Activated CD4-positive, alpha-beta T cell treated with anti-CD3 and anti-CD28 coated beads, Interleukin-2, amount 10 ng/mL, durations not matched to agents 24 days and 14 days (primary cell): ENCODE measurements at regions of chr11 and their contacts with region 1.

Region 1: GRCh38 chr11:71928737-71929452 is at the start of gene RNF121:
- DNase-seq: peak; percentile 99
- H3K4me3 Mint-ChIP-seq: peak within 1 kb of the TSS; percentile 100
- H3K27ac Mint-ChIP-seq: peak within 1 kb of the TSS; percentile 99
- H3K4me1 Mint-ChIP-seq: peaks cover 41% of the 10 kb centered on the region
- H3K27me3 Mint-ChIP-seq: no peaks in the 10 kb centered on the region
- total RNA-seq, gene RNF121: 56.4 and 65.4 TPM in 2 replicates

Region 2: DNA sequence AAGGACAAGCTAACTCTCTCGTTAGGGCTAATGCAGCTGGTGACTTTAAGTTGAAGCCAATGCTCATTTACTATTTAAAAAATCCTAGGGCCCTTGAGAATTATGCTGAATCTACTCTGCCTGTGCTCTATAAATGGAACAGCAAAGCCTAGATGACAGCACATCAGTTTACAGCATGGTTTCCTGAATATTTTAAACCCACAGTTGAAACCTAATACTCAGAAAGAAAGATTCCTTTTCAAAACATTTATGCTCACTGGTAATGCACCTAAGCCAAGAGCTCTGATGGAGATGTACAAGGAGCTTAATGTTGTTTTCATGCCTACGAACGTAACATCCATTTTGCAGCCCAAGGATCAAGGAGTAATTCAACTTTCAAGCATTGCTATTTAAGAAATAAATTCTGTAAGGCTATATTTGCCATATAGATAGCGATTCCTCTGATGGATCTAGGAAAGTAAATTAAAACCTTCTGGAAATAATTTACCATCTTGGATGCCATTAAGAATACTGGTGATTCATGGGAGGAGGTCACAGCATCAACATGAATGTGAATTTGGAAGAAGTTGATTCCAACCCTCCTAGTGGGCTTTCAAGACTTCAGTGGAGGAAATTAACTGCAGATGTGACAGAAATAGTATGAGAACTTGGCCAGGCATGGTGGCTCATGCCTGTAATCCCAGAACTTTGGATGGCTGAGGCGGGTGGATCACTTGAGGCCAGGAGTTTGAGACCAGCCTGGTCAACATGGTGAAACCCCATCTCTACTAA is 15.0 kb before region 1 on chr11:
- intact Hi-C with region 1: loop called (anchors 1 kb)
- DNase-seq: no peak
- H3K4me3 Mint-ChIP-seq: no peak overlapping the region
- H3K27ac Mint-ChIP-seq: peak overlapping the region; percentile 48
- H3K4me1 Mint-ChIP-seq: peaks cover 20% of the 10 kb centered on the region
- H3K27me3 Mint-ChIP-seq: no peaks in the 10 kb centered on the region

Region 3: DNA sequence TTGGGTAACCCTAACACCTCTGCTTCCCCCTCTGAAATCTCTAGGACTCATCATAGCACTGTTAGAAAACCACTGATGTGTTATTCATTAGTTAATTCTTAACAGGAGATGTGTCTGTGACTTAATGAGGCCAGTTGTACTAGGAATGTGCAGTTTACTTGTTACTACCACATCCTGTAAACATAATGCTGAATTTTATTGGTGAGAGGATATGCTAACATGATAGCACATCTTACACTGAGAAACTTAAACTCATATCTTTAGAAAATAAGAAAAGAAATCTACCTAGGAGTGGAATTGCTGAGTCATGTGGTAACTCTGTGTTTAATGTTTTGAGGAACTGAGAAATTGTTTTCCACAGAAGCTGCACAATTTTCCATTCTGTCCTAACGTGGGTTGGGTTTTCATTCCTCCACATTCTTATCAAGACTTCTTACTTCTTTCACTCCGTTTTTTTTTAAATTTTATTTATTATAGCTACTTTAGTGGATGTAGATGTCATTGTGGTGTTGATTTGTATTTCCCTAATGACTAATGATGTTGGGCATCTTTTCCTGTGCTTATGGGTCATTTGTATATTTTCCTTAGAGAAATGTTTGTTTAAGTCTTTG is 33.6 kb after region 1 on chr11:
- intact Hi-C with region 1: loop called (anchors 1 kb)
- DNase-seq: no peak
- H3K4me3 Mint-ChIP-seq: peak overlapping the region; percentile 15
- H3K27ac Mint-ChIP-seq: peak overlapping the region; percentile 86
- H3K4me1 Mint-ChIP-seq: peaks cover 27% of the 10 kb centered on the region
- H3K27me3 Mint-ChIP-seq: no peaks in the 10 kb centered on the region

Region 4: DNA sequence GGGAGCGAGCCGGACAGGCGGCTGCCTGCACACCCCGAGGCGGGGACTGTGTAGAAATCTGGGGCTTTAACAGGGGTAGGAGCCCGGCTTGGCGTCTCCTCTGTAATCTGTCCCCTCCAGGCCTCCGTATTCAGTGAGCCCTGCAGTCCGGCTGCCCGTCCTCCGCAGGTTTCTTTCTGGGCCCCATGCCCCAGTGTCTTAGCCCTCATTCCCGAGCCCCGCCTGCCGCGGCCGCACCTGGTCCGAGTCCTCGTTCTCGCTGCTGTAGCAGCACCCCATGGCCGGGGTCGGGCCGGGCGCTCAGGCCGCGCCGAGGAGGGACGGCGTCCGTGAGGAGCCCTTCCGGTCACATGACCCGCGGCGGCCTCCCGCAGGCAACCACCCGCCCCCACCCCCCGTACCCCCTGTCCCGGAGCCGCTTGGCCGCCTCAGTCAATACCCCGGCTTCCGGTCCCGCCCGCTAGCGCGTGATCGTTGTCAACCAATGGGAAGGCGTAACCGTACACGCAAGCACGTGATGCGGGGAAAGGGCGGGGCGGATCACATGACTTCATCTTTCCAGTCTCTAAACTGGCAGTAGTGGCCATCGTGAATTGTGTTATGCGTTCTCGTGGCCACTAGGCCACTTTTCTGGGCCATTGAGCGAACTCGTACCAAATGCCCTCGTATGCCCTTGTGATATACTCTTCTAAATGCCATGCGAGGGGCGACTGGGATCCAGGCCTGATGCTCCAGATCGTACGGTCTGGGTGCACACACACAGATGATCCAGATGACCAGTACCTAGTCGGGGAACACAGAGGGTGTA is 174.3 kb after region 1 on chr11 and contains the start of gene LAMTOR1:
- intact Hi-C with region 1: loop called (anchors 2 kb)
- DNase-seq: peak; percentile 100
- H3K4me3 Mint-ChIP-seq: peak within 1 kb of the TSS; percentile 98
- H3K27ac Mint-ChIP-seq: peak within 1 kb of the TSS; percentile 94
- H3K4me1 Mint-ChIP-seq: peaks cover 38% of the 10 kb centered on the region
- H3K27me3 Mint-ChIP-seq: no peaks in the 10 kb centered on the region
- total RNA-seq, gene LAMTOR1: 78.6 and 81.4 TPM in 2 replicates

Region 5: DNA sequence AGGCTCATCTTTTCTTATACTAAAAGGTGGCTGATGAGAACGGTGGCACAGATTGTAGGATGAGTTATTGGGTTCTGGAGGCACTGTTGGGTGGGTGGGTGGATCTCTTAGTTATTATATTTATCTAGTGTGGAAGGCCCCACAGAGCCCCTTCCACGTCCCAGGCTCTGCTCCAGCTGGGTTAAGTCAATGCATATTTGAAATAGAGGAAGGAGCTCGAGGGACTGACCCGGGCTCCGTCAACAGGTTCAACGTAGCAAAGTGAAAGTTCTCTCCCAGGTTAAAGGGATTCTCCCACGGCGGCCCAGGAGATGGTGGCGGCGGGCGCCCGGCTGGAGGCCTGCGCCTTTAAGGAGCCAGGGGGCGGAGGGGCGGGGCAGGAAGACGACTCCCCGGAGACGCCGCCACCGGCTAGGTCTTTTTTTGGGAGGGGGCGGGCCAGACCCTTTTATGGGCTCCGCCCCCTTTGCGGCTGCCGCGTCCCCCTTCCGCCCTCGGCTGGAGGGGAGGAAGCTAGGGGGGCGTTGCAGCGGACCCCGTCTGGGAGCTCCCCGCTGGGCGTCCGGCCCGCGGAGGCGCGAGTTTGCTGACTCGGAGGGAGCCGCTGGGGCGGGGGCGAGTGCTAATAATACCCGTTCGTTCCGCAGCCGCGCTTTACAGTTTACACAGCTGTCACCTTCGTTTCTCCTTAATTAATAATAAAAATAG is 294.2 kb after region 1 on chr11:
- intact Hi-C with region 1: loop called (anchors 2 kb)
- DNase-seq: peak; percentile 99
- H3K4me3 Mint-ChIP-seq: peak overlapping the region; percentile 98
- H3K27ac Mint-ChIP-seq: peak overlapping the region; percentile 87
- H3K4me1 Mint-ChIP-seq: peaks cover 20% of the 10 kb centered on the region
- H3K27me3 Mint-ChIP-seq: peaks cover 8% of the 10 kb centered on the region